ENCODE measurements at regions of chr10 and their contacts with region 1.

Region 1: DNA sequence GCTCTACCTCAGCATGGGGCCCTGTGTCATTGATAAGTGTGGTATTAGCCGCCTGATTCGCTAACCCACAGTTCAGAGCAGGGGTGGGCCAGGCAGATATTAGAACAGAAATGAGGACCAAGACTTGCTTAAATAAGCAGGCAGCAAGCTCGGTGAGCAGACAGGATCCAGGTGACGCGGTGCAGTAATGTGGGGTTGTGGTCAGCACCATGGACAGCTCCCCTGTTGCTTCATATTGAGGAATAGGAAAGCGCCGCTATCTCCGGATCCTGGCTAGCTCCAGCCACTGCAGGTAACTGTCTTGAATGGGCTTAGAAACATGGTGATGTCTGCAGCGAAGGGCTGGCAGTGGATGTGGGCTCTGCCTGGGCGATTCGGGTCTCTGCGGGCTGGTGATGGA is 51.3 kb upstream of the GPR26 start:
- DNase-seq: no peak
- H3K4me3 ChIP-seq: no peak overlapping the region
- H3K27ac ChIP-seq: no peak overlapping the region
- H3K4me1 ChIP-seq: no peaks in the 10 kb centered on the region
- H3K27me3 ChIP-seq: no peaks in the 10 kb centered on the region
- CTCF ChIP-seq: no peak
- POLR2A ChIP-seq: no peak

Region 2: DNA sequence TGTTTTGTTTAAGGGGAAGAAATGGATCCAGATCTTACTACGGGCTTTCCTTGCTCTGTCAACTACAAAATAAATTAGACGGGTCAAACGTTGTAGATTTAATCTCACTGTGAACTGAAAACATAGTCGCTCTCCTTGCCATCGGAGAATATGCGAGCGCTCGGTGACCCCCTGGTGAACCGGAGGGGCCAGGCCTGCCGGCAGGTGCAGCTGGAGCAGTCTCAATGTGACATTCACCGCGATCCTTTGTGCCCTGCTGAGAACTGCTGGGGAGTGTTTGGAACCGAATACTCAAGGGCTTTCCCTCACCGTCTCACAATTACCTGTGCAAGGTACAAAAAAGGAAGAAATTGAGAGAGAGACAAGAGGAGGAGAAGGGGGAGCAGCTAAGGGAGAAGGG is 122.9 kb before region 1 on chr10:
- intact Hi-C with region 1: no loop called
- DNase-seq: no peak
- H3K4me3 ChIP-seq: no peak overlapping the region
- H3K27ac ChIP-seq: no peak overlapping the region
- H3K4me1 ChIP-seq: no peaks in the 10 kb centered on the region
- H3K27me3 ChIP-seq: no peaks in the 10 kb centered on the region
- CTCF ChIP-seq: no peak
- POLR2A ChIP-seq: no peak

Region 3: DNA sequence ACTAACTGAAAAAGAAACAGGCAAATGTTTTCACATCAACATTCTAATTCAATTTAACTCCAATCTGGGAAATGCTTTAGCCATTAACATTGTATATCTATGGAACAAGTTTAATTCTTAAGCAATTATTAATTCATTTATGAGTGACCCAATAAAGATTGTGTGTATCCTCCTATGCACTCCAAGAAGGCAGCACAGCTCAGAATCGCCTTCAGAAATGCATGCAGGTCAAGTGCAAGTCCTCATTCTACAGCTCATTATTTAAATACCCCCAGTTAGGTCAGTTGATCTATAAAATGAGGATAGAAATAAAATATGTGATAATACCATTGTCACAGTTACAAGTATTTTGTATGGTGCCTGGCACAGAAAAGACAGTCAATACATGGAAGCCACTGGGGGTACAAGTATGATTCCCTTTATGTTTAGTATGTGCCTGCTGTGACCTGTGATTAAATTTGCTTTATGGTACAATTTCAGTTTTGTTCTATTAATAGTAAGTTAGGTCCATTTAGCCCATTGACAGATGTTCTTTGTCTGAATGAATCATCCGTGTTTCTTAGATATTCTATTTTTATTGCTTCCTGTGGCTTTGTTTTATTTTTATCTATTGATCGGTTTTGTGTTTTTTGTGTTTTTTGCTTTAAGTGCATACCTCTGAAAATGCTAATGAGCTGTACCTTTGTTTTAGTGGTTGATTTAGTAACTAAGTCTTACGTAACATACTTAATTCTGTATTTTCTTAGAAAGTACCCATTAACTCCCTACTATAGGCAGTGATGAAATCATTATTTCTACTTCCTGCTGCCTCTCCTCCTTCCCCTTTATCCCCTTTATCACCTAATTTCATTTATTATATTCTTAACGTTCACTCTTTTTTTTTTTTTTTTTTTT is 233.9 kb after region 1 on chr10:
- intact Hi-C with region 1: no loop called
- DNase-seq: no peak
- H3K4me3 ChIP-seq: no peak overlapping the region
- H3K27ac ChIP-seq: no peak overlapping the region
- H3K4me1 ChIP-seq: peaks cover 13% of the 10 kb centered on the region
- H3K27me3 ChIP-seq: no peaks in the 10 kb centered on the region
- CTCF ChIP-seq: no peak
- POLR2A ChIP-seq: no peak

Region 4: DNA sequence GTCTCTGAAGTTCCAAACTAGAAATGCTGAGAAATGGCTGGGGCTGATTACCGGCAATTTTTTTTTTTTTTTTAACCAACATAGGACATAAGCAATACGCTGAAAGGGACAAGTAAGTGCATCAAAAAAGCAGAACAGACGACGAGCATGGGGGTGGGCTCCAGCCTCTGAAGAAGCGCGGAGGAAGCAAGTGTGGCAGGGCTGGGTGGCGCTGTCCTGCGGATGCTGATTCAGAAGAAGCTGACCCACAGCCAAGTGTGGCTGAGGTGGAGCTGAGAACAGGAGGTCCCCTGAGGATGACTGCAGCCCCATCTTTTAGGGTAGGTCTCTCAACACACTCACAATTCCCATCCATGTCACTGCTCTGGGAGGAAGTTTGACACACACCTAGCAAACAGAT is 1479.9 kb after region 1 on chr10:
- intact Hi-C with region 1: loop called (anchors 5 kb)
- DNase-seq: no peak
- H3K4me3 ChIP-seq: no peak overlapping the region
- H3K27ac ChIP-seq: peak overlapping the region; percentile 68
- H3K4me1 ChIP-seq: peaks cover 61% of the 10 kb centered on the region
- H3K27me3 ChIP-seq: no peaks in the 10 kb centered on the region
- CTCF ChIP-seq: no peak
- POLR2A ChIP-seq: no peak

Measured in vagina (tissue), 2 donors.